CD4-positive, alpha-beta memory T cell (primary cell): ENCODE measurements at regions of chr3 and their contacts with region 1.

Region 1: DNA sequence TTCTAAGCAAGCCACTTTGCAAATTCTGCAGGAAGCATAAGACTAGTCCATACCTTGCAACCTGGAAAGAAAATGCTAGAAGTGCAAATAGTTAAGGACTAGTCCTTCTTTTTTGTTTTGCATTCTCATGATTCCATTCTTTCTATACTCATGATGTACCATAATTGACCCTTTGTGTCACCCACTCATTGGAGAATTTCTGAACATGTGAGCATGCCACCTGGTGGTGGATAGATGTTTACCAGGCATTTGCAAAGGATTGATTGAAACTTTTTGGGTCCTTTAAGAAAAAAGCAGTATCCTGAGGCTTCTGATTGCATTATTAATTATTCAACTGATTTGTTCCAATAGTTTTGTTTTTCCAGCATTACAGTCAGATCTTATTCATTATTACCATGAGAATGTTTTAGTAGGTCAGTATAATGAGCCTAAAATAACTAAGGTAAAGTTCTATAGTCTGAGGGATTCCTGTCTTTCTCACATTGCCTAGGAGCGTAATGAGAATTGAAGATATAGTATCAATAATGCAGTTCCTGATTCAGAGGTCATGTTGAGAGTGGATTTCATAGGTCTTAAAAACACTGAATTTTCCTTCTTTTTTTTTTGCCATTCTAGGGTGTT is 20.2 kb upstream of the DIPK2A start:
- DNase-seq: peak in 4 of 5 donors; percentile 29 to 41 (median 32)
- H3K4me3 ChIP-seq: no peak overlapping the region
- H3K4me3 Mint-ChIP-seq: no peak overlapping the region
- H3K27ac ChIP-seq: no peak overlapping the region
- H3K27ac Mint-ChIP-seq: no peak overlapping the region
- H3K4me1 ChIP-seq: no peaks in the 10 kb centered on the region
- H3K4me1 Mint-ChIP-seq: peaks cover 0 to 2% (median 0%) of the 10 kb centered on the region in 4 donors
- H3K27me3 ChIP-seq: no peaks in the 10 kb centered on the region
- H3K27me3 Mint-ChIP-seq: peaks cover 1 to 2% of the 10 kb centered on the region in 2 donors

Region 2: DNA sequence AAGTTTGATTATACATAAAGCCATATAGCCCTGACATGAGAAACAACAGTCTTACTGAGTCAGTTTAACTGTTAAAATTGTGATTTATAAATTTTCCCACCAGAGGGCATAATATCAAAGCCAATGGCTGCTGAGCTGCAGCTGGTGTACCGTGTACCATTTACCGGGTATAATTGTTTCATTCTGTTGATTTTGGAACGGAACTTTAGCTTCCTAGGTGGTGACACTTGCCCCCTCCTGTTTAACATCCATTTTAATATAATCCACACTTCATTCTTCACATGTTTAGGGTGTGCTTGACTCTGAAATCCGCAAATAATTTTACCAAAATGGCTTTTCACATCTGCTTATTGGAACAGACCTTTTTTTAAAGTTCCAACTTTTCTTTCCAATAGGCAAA is 176.0 kb before region 1 on chr3:
- CTCF ChIA-PET with region 1: interaction called, 23 read pairs
- POLR2A ChIA-PET with region 1: no interaction called
- intact Hi-C with region 1: loop called (anchors 1 kb)
- DNase-seq: peak in 4 of 5 donors; percentile 40 to 52 (median 43)
- H3K4me3 ChIP-seq: no peak overlapping the region
- H3K4me3 Mint-ChIP-seq: peak overlapping the region in 2 of 8 donors; percentile 17 to 45
- H3K27ac ChIP-seq: no peak overlapping the region
- H3K27ac Mint-ChIP-seq: no peak overlapping the region
- H3K4me1 ChIP-seq: no peaks in the 10 kb centered on the region
- H3K4me1 Mint-ChIP-seq: peaks cover 0 to 4% (median 1%) of the 10 kb centered on the region in 4 donors
- H3K27me3 ChIP-seq: no peaks in the 10 kb centered on the region
- H3K27me3 Mint-ChIP-seq: no peaks in the 10 kb centered on the region

Region 3: DNA sequence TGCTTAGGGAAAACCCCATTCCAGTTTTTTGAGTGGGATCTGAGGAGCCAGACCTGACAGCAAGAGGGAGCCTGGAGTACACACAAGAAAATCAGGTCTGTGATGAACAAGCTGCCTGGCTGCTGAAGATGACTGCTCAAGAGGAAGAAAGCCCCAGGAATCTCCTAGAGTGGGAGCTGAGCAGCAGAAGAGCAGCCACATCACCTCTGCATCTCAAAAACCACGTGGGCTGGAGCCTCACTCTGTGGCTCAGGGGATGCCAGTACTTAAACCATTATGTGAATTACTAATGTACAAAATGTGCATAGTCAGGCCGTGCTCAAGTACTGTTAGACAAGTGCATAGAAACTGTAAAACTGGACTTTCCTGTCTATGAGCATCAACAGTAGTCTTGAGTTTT is 155.6 kb before region 1 on chr3:
- CTCF ChIA-PET with region 1: no interaction called
- POLR2A ChIA-PET with region 1: no interaction called
- intact Hi-C with region 1: loop called (anchors 1 kb)
- DNase-seq: no peak
- H3K4me3 ChIP-seq: no peak overlapping the region
- H3K4me3 Mint-ChIP-seq: no peak overlapping the region
- H3K27ac ChIP-seq: no peak overlapping the region
- H3K27ac Mint-ChIP-seq: peak overlapping the region in 1 of 7 donors; percentile 25
- H3K4me1 ChIP-seq: no peaks in the 10 kb centered on the region
- H3K4me1 Mint-ChIP-seq: peaks cover 0 to 7% (median 4%) of the 10 kb centered on the region in 4 donors
- H3K27me3 ChIP-seq: no peaks in the 10 kb centered on the region
- H3K27me3 Mint-ChIP-seq: no peaks in the 10 kb centered on the region

Region 4: DNA sequence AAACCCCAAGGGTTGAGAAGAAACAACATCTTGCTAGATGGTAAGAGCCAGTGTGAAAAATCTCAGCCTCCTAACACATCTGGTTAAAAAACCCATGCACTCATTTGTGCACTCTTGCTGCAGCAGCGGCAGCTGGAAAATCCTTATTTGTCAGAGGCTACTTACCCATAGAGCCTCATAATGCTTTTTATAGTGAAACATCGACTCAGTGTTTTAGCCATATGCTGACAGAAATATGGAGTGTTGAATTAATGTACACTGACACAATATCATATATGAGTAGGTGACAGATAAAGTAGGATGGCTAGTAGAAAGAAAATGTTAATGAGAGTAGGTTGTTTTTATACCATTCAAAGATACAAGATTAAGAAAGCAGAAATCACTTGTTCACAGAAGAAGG is 116.1 kb before region 1 on chr3:
- CTCF ChIA-PET with region 1: no interaction called
- POLR2A ChIA-PET with region 1: no interaction called
- intact Hi-C with region 1: no loop called
- DNase-seq: no peak
- H3K4me3 ChIP-seq: no peak overlapping the region
- H3K4me3 Mint-ChIP-seq: peak overlapping the region in 1 of 8 donors; percentile 2
- H3K27ac ChIP-seq: no peak overlapping the region
- H3K27ac Mint-ChIP-seq: peak overlapping the region in 3 of 7 donors; percentile 5 to 26 (median 23)
- H3K4me1 ChIP-seq: peaks cover 29% of the 10 kb centered on the region
- H3K4me1 Mint-ChIP-seq: peaks cover 38 to 53% (median 47%) of the 10 kb centered on the region in 4 donors
- H3K27me3 ChIP-seq: no peaks in the 10 kb centered on the region
- H3K27me3 Mint-ChIP-seq: no peaks in the 10 kb centered on the region

Region 5: DNA sequence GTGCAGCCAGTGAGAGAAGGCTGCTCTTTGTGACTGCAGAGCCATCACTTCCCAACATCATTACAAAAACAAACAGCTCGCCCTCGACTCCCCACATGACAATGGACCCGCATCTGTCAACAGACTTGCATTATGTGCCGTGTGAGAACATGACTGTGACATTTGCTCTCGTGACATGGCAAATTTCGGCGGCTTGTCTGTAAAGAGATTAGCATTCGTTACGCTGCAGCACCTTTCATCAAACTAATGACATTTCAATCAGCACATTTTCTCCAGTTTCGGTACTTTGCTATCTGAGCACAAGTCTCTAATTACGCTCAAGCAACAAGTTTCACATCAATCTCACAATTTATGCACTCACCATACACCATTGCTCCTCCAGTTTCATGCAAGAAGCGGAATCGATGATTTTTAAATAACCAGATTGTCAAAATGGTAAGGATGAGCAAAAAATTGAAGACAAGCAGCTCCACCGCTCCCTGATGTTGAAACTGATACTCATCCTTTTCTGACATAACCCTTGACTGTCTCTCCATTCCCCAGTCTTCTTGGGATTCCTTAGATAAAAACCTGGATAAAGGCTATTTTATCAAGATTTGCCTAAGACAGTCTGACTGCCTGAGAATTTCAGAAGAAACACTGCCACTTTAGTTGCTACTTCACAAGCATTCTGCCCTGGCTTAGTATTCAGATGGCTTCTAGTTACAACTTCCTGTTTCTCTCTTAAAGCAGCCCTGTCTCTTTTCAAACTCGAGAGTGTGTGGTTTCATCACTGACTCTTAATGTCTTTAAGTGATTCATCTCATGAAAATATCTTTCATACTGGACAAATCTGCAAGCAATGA is 103.5 kb before region 1 on chr3 and contains the start of gene SLC9A9:
- CTCF ChIA-PET with region 1: no interaction called
- POLR2A ChIA-PET with region 1: no interaction called
- intact Hi-C with region 1: loop called (anchors 5 kb)
- DNase-seq: peak; percentile 40 to 51 (median 46)
- H3K4me3 ChIP-seq: peak within 1 kb of the TSS; percentile 85 to 98
- H3K4me3 Mint-ChIP-seq: peak within 1 kb of the TSS; percentile 95 to 99 (median 98)
- H3K27ac ChIP-seq: peak within 1 kb of the TSS; percentile 58
- H3K27ac Mint-ChIP-seq: peak within 1 kb of the TSS; percentile 79 to 97 (median 91)
- H3K4me1 ChIP-seq: peaks cover 64% of the 10 kb centered on the region
- H3K4me1 Mint-ChIP-seq: peaks cover 45 to 71% (median 55%) of the 10 kb centered on the region in 4 donors
- H3K27me3 ChIP-seq: no peaks in the 10 kb centered on the region
- H3K27me3 Mint-ChIP-seq: no peaks in the 10 kb centered on the region
- total RNA-seq, gene SLC9A9: 30.8 to 34.8 TPM

Region 6: GRCh38 chr3:143885780-143886427 is 65.6 kb before region 1 on chr3:
- CTCF ChIA-PET with region 1: interaction called, 8 read pairs
- POLR2A ChIA-PET with region 1: no interaction called
- intact Hi-C with region 1: loop called (anchors 1 kb)
- DNase-seq: peak in 4 of 5 donors; percentile 19 to 32 (median 22)
- H3K4me3 ChIP-seq: no peak overlapping the region
- H3K4me3 Mint-ChIP-seq: no peak overlapping the region
- H3K27ac ChIP-seq: no peak overlapping the region
- H3K27ac Mint-ChIP-seq: no peak overlapping the region
- H3K4me1 ChIP-seq: no peaks in the 10 kb centered on the region
- H3K4me1 Mint-ChIP-seq: no peaks in the 10 kb centered on the region
- H3K27me3 ChIP-seq: no peaks in the 10 kb centered on the region
- H3K27me3 Mint-ChIP-seq: peaks cover 2 to 4% of the 10 kb centered on the region in 2 donors